Activated naive CD4-positive, alpha-beta T cell treated with anti-CD3 and anti-CD28 coated beads for 36 hours (primary cell): ENCODE measurements at regions of chr6 and their contacts with region 1.

Region 1: GRCh38 chr6:498795-499231 is 107.3 kb downstream of the IRF4 start:
- DNase-seq: peak; percentile 80
- H3K4me3 Mint-ChIP-seq: peak overlapping the region; percentile 56
- H3K27ac Mint-ChIP-seq: peak overlapping the region; percentile 96
- H3K4me1 Mint-ChIP-seq: peaks cover 83% of the 10 kb centered on the region
- H3K27me3 Mint-ChIP-seq: no peaks in the 10 kb centered on the region

Region 2: DNA sequence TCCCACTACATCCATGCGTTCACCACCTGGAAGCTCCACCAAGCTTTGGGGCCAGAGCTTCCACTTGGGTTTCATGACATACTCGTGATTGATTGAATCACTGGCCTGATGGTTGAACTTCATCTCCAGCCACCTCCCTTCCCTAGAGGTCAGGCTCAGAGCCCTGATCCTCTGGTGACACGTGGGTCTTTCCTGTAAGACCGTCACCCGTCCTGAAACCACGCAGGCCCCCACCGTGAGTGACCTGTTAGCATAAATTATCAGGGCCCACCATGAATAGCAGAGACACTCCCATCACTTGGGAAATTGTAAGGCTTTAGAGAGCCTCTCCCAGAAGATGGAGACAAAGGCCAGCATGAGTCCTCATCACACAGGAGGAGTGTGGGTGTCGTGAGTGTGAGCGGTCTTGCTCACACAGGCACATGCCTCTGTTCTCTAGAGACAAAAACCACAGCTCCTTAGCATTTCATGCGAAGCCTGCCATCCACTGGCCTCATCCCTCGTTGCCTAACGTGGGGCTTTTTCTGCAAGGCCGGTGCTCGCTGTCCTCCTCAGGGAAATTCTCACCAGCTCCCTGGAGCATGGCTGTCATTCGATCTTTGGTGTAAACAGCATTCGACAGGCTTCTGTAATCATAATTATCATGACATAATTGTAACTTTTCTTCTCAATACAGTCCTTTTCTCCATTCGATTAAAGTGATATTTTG is 271.6 kb before region 1 on chr6:
- CTCF ChIA-PET with region 1: no interaction called
- intact Hi-C with region 1: loop called (anchors 2 kb)
- DNase-seq: peak; percentile 60
- H3K4me3 Mint-ChIP-seq: no peak overlapping the region
- H3K27ac Mint-ChIP-seq: peak overlapping the region; percentile 95
- H3K4me1 Mint-ChIP-seq: peaks cover 65% of the 10 kb centered on the region
- H3K27me3 Mint-ChIP-seq: no peaks in the 10 kb centered on the region

Region 3: GRCh38 chr6:317448-318144 is 181.2 kb before region 1 on chr6:
- CTCF ChIA-PET with region 1: no interaction called
- intact Hi-C with region 1: no loop called
- DNase-seq: no peak
- H3K4me3 Mint-ChIP-seq: no peak overlapping the region
- H3K27ac Mint-ChIP-seq: no peak overlapping the region
- H3K4me1 Mint-ChIP-seq: peaks cover 29% of the 10 kb centered on the region
- H3K27me3 Mint-ChIP-seq: no peaks in the 10 kb centered on the region

Region 4: GRCh38 chr6:422433-423054 is 76.3 kb before region 1 on chr6:
- CTCF ChIA-PET with region 1: no interaction called
- intact Hi-C with region 1: loop called (anchors 2 kb)
- DNase-seq: peak; percentile 91
- H3K4me3 Mint-ChIP-seq: no peak overlapping the region
- H3K27ac Mint-ChIP-seq: peak overlapping the region; percentile 81
- H3K4me1 Mint-ChIP-seq: peaks cover 31% of the 10 kb centered on the region
- H3K27me3 Mint-ChIP-seq: no peaks in the 10 kb centered on the region

Region 5: DNA sequence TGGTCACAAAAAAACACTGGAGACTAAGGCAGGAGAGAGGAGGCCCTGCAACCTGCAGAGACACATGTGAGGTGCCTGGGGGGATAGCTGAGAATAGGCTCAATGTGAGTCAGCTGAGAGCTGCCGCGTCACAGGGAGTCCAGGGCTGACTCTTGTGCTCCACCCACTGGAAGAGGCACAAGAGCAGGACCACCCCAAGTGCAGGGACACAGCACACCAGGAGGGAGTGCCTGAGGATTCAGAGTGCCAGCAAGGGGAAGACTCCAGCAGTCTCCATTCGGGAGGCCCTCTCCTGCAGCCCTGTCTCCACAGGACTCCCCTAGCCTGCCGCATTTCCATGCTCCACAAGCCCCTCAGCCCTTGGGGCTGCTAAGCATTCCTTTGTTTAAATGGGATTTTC is 52.6 kb after region 1 on chr6:
- CTCF ChIA-PET with region 1: no interaction called
- intact Hi-C with region 1: loop called (anchors 1 kb)
- DNase-seq: peak; percentile 56
- H3K4me3 Mint-ChIP-seq: no peak overlapping the region
- H3K27ac Mint-ChIP-seq: peak overlapping the region; percentile 79
- H3K4me1 Mint-ChIP-seq: peaks cover 57% of the 10 kb centered on the region
- H3K27me3 Mint-ChIP-seq: no peaks in the 10 kb centered on the region

Region 6: GRCh38 chr6:683742-684440 is 185.1 kb after region 1 on chr6:
- CTCF ChIA-PET with region 1: no interaction called
- intact Hi-C with region 1: loop called (anchors 2 kb)
- DNase-seq: no peak
- H3K4me3 Mint-ChIP-seq: peak overlapping the region; percentile 10
- H3K27ac Mint-ChIP-seq: no peak overlapping the region
- H3K4me1 Mint-ChIP-seq: peaks cover 52% of the 10 kb centered on the region
- H3K27me3 Mint-ChIP-seq: no peaks in the 10 kb centered on the region